OCI-LY7 (cell line): ENCODE measurements at regions of chr18 and their contacts with region 1.

Region 1: DNA sequence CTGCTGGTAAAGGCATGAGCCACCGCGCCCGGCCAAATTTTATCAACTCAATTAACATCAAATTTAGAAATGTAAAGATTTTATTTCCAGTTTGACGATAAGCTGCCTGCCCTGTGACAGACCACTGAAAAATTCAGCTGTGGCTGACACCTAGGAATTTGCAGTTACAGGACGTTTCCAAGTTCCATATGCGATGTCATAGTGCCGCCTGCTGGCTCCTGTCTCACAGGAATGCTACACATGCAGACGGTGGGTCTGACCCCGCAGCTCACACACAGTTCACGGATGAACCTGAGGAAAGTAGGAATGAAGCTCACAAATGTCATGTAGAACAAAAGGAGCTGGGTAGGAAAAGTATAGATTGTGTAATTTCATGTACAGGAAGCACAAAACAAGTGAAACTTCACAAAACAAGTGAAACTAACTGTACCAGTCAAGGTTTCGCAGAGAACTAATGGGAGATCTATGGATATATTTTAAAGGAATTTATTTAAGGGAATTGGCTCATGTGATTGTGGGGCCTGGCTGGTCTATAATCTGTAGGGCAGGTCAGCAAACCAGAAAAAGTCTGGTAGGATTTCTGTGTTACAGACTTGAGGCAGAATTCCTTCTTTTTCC is 13.2 kb upstream of the SEH1L start:
- DNase-seq: peak; percentile 83
- H3K4me3 ChIP-seq: no peak overlapping the region
- H3K27ac ChIP-seq: no peak overlapping the region
- H3K4me1 ChIP-seq: peaks cover 12% of the 10 kb centered on the region
- CTCF ChIP-seq: peak; percentile 98

Region 2: GRCh38 chr18:12391618-12392165 is 542.9 kb before region 1 on chr18:
- CTCF ChIA-PET with region 1: no interaction called
- POLR2A ChIA-PET with region 1: no interaction called
- intact Hi-C with region 1: loop called (anchors 5 kb)
- DNase-seq: peak; percentile 73
- H3K4me3 ChIP-seq: no peak overlapping the region
- H3K27ac ChIP-seq: no peak overlapping the region
- H3K4me1 ChIP-seq: no peaks in the 10 kb centered on the region
- CTCF ChIP-seq: peak; percentile 96

Region 3: DNA sequence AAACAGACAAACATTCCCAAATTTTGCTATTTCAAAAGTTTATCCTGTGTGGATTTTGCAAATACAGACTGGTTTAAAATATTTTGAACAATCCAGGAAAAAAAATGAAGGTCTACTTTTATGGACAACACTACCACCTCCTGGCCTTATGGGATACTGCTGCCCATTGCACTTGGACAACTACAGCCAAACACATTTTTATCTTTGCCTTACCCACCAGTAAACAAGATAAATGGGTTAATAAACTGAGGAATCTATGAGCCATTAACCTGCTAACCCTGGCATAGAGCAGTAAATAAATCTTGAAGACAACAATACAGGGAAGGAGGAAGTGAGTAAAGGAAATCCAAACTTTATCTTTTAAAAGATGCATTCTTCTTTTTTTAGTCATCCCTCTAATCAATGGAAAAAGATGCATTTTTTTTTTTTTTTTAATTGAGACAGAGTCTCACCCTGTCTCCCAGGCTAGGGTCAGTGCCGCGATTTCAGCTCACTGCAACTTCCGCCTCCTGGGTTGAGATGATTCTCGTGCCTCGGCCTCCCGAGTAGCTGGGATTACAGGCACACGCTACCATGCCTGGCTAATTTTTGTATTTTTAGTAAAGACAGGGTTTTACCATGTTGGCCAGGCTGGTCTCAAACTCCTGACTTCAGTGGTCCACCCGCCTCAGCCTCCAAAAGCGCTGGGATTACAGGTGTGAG is 274.5 kb before region 1 on chr18:
- CTCF ChIA-PET with region 1: no interaction called
- POLR2A ChIA-PET with region 1: no interaction called
- intact Hi-C with region 1: loop called (anchors 10 kb)
- DNase-seq: peak; percentile 47
- H3K4me3 ChIP-seq: no peak overlapping the region
- H3K27ac ChIP-seq: no peak overlapping the region
- H3K4me1 ChIP-seq: peaks cover 3% of the 10 kb centered on the region
- CTCF ChIP-seq: peak; percentile 95

Region 4: GRCh38 chr18:12726774-12727550 is 207.6 kb before region 1 on chr18:
- CTCF ChIA-PET with region 1: interaction called, 3 read pairs
- POLR2A ChIA-PET with region 1: interaction called, 4 read pairs
- intact Hi-C with region 1: loop called (anchors 1 kb)
- DNase-seq: peak; percentile 76
- H3K4me3 ChIP-seq: no peak overlapping the region
- H3K27ac ChIP-seq: no peak overlapping the region
- H3K4me1 ChIP-seq: peaks cover 8% of the 10 kb centered on the region
- CTCF ChIP-seq: peak; percentile 96

Region 5: GRCh38 chr18:12744103-12744502 is 190.5 kb before region 1 on chr18:
- CTCF ChIA-PET with region 1: interaction called, 3 read pairs
- POLR2A ChIA-PET with region 1: no interaction called
- intact Hi-C with region 1: loop called (anchors 1 kb)
- DNase-seq: peak; percentile 74
- H3K4me3 ChIP-seq: no peak overlapping the region
- H3K27ac ChIP-seq: no peak overlapping the region
- H3K4me1 ChIP-seq: peaks cover 18% of the 10 kb centered on the region
- CTCF ChIP-seq: peak; percentile 94

Region 6: DNA sequence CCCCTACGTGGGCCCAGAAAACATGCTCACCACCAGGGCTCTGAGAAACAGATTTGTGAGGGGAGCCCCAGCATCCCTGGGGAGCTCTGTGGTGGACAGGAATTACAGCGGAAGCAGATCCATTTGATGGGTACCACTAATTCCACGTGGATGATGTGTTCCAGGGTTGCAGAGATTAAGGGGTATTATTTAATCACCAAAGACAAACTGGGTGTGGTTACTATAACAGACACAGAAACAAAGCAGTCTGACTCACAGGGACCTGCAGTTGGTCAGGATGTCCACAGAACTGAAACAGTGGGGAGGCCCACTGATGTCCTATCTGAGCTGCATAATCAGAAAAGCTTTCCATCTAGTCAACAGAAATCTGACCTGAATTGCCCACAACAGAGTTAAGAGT is 165.9 kb before region 1 on chr18:
- CTCF ChIA-PET with region 1: no interaction called
- POLR2A ChIA-PET with region 1: no interaction called
- intact Hi-C with region 1: no loop called
- DNase-seq: no peak
- H3K4me3 ChIP-seq: no peak overlapping the region
- H3K27ac ChIP-seq: no peak overlapping the region
- H3K4me1 ChIP-seq: no peaks in the 10 kb centered on the region
- CTCF ChIP-seq: no peak

Region 7: DNA sequence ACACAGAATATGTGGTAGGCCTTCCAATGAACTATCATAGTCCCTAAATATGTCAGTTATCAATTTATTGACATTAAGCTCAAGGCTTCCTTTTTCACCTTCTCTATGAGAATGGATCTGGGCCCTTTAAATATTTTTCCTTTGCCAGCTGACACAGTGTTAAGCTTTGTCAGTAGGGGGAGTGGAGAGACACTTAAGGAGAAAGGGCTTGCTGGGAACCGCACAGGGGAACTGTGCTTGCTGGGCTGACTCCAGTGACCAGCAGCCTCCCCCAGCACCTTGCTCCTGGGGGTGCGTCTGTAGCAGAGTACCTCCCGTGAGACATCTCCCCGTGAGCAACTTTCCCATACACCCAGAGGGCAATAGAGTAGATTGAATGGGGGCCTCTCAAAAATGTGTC is 44.1 kb before region 1 on chr18:
- CTCF ChIA-PET with region 1: no interaction called
- POLR2A ChIA-PET with region 1: interaction called, 3 read pairs
- intact Hi-C with region 1: loop called (anchors 5 kb)
- DNase-seq: no peak
- H3K4me3 ChIP-seq: no peak overlapping the region
- H3K27ac ChIP-seq: no peak overlapping the region
- H3K4me1 ChIP-seq: peaks cover 13% of the 10 kb centered on the region
- CTCF ChIP-seq: peak; percentile 40; the same call in 1 of the 2 replicates

Region 8: GRCh38 chr18:13137670-13138419 is 203.3 kb after region 1 on chr18:
- CTCF ChIA-PET with region 1: no interaction called
- POLR2A ChIA-PET with region 1: no interaction called
- intact Hi-C with region 1: no loop called
- DNase-seq: no peak
- H3K4me3 ChIP-seq: no peak overlapping the region
- H3K27ac ChIP-seq: no peak overlapping the region
- H3K4me1 ChIP-seq: no peaks in the 10 kb centered on the region
- CTCF ChIP-seq: no peak

Region 9: DNA sequence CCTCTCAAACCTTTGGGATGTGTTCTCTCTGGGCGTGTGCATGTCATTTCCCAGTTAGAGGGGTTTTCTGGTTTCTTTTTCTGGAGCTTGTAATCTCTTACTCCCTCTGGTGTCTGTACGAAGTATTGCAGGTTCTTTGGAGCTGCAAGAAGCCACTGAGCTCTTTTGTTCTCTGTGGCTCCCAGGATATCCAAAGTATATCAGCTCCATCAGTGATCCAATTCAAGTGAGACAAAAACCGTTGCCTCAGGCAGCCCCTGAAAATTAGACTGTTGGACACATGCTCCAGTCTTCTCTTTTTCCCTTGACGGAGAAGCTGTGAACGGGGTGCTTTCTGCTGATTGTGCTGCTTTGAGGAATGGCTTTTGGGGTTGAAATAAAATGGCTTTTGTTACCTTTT is 225.0 kb after region 1 on chr18:
- CTCF ChIA-PET with region 1: interaction called, 3 read pairs
- POLR2A ChIA-PET with region 1: no interaction called
- intact Hi-C with region 1: loop called (anchors 10 kb)
- DNase-seq: peak; percentile 74
- H3K4me3 ChIP-seq: no peak overlapping the region
- H3K27ac ChIP-seq: no peak overlapping the region
- H3K4me1 ChIP-seq: no peaks in the 10 kb centered on the region
- CTCF ChIP-seq: peak; percentile 88